CD14-positive monocyte (primary cell): ENCODE measurements at regions of chr1 and their contacts with region 1.

Region 1: DNA sequence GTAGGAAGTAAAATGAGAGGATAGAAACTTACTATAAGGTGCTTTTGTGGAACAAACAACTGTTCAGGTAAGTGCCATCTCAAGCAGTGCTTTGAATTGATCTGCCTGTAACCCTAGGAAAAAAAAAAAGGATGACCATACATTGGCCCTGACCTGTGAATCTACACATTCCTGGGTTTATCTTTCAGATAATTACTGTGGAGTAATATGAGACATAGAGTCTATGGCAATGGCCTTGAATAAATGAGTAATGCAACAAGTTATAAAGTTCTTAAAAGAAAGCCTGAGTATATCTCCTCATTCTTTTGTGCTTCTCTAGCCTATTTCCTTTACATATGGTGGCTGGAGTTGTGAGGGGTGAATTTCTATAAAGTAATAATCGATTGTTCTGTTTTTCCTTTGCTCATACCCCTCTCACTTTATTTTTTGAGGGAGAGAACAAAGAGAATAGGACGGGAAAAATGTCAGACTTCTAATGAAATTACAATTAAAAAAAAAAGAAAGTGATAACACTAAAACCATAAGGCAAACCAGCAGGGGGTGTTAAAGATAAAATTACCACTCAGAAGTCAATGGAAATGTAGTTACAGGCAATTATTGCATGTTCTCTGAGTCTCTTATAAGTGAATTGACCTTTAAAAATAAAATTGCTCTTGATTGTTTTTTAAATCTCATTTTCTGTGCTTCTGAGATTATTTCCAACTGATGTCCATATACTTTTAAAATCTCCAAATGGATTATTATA is 12.4 kb upstream of the ATP1A1 start:
- DNase-seq: peak in 2 of 3 donors; percentile 25 to 47
- H3K4me3 ChIP-seq: no peak overlapping the region
- H3K4me3 Mint-ChIP-seq: no peak overlapping the region
- H3K27ac ChIP-seq: no peak overlapping the region
- H3K27ac Mint-ChIP-seq: no peak overlapping the region
- H3K4me1 ChIP-seq: no peaks in the 10 kb centered on the region
- H3K4me1 Mint-ChIP-seq: peaks cover 8% of the 10 kb centered on the region
- H3K27me3 ChIP-seq: no peaks in the 10 kb centered on the region
- H3K27me3 Mint-ChIP-seq: peaks cover 2 to 3% (median 3%) of the 10 kb centered on the region in 3 donors
- CTCF ChIP-seq: peak; percentile 42

Region 2: GRCh38 chr1:116185161-116185701 is 175.4 kb before region 1 on chr1:
- intact Hi-C with region 1: no loop called
- DNase-seq: no peak
- H3K4me3 ChIP-seq: no peak overlapping the region
- H3K4me3 Mint-ChIP-seq: no peak overlapping the region
- H3K27ac ChIP-seq: no peak overlapping the region
- H3K27ac Mint-ChIP-seq: no peak overlapping the region
- H3K4me1 ChIP-seq: no peaks in the 10 kb centered on the region
- H3K4me1 Mint-ChIP-seq: no peaks in the 10 kb centered on the region
- H3K27me3 ChIP-seq: peaks cover 0 to 2% of the 10 kb centered on the region in 2 donors
- H3K27me3 Mint-ChIP-seq: peaks cover 3 to 16% (median 8%) of the 10 kb centered on the region in 3 donors
- CTCF ChIP-seq: no peak

Region 3: GRCh38 chr1:116254776-116255175 is 105.8 kb before region 1 on chr1:
- intact Hi-C with region 1: no loop called
- DNase-seq: no peak
- H3K4me3 ChIP-seq: no peak overlapping the region
- H3K4me3 Mint-ChIP-seq: peak overlapping the region in 1 of 2 donors; percentile 21
- H3K27ac ChIP-seq: no peak overlapping the region
- H3K27ac Mint-ChIP-seq: peak overlapping the region in 1 of 7 donors; percentile 13
- H3K4me1 ChIP-seq: peaks cover 0 to 4% of the 10 kb centered on the region in 2 donors
- H3K4me1 Mint-ChIP-seq: peaks cover 10% of the 10 kb centered on the region
- H3K27me3 ChIP-seq: no peaks in the 10 kb centered on the region
- H3K27me3 Mint-ChIP-seq: peaks cover 0 to 5% (median 0%) of the 10 kb centered on the region in 3 donors
- CTCF ChIP-seq: no peak

Region 4: GRCh38 chr1:116426401-116426800 is 65.8 kb after region 1 on chr1:
- intact Hi-C with region 1: loop called in 1 of 2 experiments (anchors 10 kb)
- DNase-seq: no peak
- H3K4me3 ChIP-seq: no peak overlapping the region
- H3K4me3 Mint-ChIP-seq: no peak overlapping the region
- H3K27ac ChIP-seq: no peak overlapping the region
- H3K27ac Mint-ChIP-seq: no peak overlapping the region
- H3K4me1 ChIP-seq: no peaks in the 10 kb centered on the region
- H3K4me1 Mint-ChIP-seq: no peaks in the 10 kb centered on the region
- H3K27me3 ChIP-seq: no peaks in the 10 kb centered on the region
- H3K27me3 Mint-ChIP-seq: peaks cover 3 to 8% (median 4%) of the 10 kb centered on the region in 3 donors
- CTCF ChIP-seq: no peak

Region 5: DNA sequence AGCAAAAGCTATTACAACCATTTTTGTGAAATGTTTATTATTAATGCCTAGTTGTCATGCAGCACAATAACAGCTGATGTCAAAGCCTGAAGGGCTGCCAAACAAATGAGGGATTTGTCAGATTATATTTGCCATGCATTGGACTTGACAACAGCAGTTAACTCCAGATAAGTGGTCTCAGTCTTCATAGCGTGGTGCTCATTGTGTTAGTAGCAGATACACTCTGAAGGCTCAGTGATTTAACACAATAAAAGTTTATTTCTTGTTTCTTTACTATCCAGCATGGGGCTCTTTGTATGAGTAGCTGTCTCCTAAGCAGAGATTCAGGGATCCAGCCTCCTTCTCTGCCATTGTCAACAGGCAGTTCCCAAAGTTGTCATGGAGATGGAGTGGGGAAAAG is 473.1 kb after region 1 on chr1:
- intact Hi-C with region 1: no loop called
- DNase-seq: no peak
- H3K4me3 ChIP-seq: no peak overlapping the region
- H3K4me3 Mint-ChIP-seq: no peak overlapping the region
- H3K27ac ChIP-seq: no peak overlapping the region
- H3K27ac Mint-ChIP-seq: no peak overlapping the region
- H3K4me1 ChIP-seq: no peaks in the 10 kb centered on the region
- H3K4me1 Mint-ChIP-seq: no peaks in the 10 kb centered on the region
- H3K27me3 ChIP-seq: peaks cover 0 to 2% of the 10 kb centered on the region in 2 donors
- H3K27me3 Mint-ChIP-seq: peaks cover 3 to 11% (median 7%) of the 10 kb centered on the region in 3 donors
- CTCF ChIP-seq: no peak